ENCODE measurements at regions of chr5 and their contacts with region 1.

Region 1: DNA sequence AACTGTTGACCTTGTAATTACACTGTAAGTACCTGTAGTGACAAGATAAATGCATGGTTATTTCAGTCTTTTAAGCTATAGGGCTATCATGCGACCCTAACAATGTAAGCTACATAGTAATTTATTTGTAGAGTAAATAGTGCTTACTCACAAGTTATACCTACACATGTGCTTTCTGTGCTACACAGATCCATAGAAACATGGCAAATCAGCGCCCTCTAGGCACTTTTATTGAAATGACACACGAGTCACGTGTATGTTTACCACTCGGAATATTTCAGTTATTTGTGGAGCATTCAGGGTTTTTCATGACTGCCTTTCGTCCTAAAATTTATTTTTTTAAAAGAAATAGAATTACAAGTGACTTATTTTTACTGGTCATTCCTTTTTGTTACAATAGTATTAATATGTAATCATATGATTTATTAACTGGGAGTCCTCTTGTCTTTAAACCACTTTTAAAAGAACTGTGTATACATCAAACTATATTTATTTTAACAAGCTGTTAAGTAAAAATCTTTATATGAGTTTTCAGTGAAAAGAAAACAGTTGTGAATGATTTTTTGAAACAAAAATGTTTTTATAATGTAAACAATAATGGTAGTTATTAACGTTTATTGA is 1242.3 kb upstream of the WWC1 start:
- DNase-seq: peak; percentile 45
- ATAC-seq: peak; percentile 60
- H3K4me3 Mint-ChIP-seq: no peak overlapping the region
- H3K27ac Mint-ChIP-seq: no peak overlapping the region
- H3K4me1 Mint-ChIP-seq: peaks cover 10% of the 10 kb centered on the region
- H3K27me3 Mint-ChIP-seq: no peaks in the 10 kb centered on the region
- CTCF ChIP-seq: peak; percentile 56

Region 2: GRCh38 chr5:167217097-167217743 is 168.1 kb after region 1 on chr5:
- CTCF ChIA-PET with region 1: interaction called, 10 read pairs
- POLR2A ChIA-PET with region 1: no interaction called
- DNase-seq: no peak
- ATAC-seq: peak; percentile 47
- H3K4me3 Mint-ChIP-seq: no peak overlapping the region
- H3K27ac Mint-ChIP-seq: no peak overlapping the region
- H3K4me1 Mint-ChIP-seq: peaks cover 24% of the 10 kb centered on the region
- H3K27me3 Mint-ChIP-seq: no peaks in the 10 kb centered on the region
- CTCF ChIP-seq: no peak

Region 3: GRCh38 chr5:167244583-167244982 is 195.4 kb after region 1 on chr5:
- CTCF ChIA-PET with region 1: interaction called, 29 read pairs
- POLR2A ChIA-PET with region 1: interaction called, 3 read pairs
- DNase-seq: peak; percentile 65
- ATAC-seq: peak; percentile 96
- H3K4me3 Mint-ChIP-seq: no peak overlapping the region
- H3K27ac Mint-ChIP-seq: no peak overlapping the region
- H3K4me1 Mint-ChIP-seq: peaks cover 4% of the 10 kb centered on the region; the same call in 1 of the 2 replicates
- H3K27me3 Mint-ChIP-seq: no peaks in the 10 kb centered on the region
- CTCF ChIP-seq: peak; percentile 39; the same call in 1 of the 2 replicates

Region 4: DNA sequence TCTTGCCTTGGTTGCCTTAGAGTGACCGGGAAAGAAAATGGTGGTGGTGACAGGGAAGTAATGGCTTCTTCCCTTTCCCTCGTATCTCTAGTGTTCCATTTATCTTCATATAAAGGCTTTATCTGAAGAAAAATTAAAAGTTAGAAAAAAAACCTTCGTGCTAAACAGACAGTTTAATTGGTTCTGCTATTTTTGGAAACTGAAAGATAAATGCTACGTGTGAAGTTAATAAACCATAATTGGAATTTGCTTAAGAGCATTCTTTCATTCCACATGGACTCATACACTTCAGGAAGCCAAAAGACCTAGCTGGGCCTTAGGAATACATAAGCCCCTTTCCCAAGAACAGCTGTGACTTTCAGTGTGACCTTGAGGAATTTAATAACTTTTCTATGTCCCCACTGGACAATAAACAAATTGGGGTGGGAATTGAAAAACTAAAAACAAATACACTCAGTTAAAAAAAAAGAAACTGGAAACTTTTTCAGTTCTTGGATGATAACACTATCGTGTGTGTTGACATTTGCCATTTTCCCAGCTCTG is 423.5 kb after region 1 on chr5:
- CTCF ChIA-PET with region 1: no interaction called
- POLR2A ChIA-PET with region 1: no interaction called
- DNase-seq: no peak
- ATAC-seq: no peak
- H3K4me3 Mint-ChIP-seq: no peak overlapping the region
- H3K27ac Mint-ChIP-seq: no peak overlapping the region
- H3K4me1 Mint-ChIP-seq: peaks cover 2% of the 10 kb centered on the region; the same call in 1 of the 2 replicates
- H3K27me3 Mint-ChIP-seq: no peaks in the 10 kb centered on the region
- CTCF ChIP-seq: no peak